Calu3 (cell line): ENCODE measurements at regions of chr20 and their contacts with region 1.

Region 1: DNA sequence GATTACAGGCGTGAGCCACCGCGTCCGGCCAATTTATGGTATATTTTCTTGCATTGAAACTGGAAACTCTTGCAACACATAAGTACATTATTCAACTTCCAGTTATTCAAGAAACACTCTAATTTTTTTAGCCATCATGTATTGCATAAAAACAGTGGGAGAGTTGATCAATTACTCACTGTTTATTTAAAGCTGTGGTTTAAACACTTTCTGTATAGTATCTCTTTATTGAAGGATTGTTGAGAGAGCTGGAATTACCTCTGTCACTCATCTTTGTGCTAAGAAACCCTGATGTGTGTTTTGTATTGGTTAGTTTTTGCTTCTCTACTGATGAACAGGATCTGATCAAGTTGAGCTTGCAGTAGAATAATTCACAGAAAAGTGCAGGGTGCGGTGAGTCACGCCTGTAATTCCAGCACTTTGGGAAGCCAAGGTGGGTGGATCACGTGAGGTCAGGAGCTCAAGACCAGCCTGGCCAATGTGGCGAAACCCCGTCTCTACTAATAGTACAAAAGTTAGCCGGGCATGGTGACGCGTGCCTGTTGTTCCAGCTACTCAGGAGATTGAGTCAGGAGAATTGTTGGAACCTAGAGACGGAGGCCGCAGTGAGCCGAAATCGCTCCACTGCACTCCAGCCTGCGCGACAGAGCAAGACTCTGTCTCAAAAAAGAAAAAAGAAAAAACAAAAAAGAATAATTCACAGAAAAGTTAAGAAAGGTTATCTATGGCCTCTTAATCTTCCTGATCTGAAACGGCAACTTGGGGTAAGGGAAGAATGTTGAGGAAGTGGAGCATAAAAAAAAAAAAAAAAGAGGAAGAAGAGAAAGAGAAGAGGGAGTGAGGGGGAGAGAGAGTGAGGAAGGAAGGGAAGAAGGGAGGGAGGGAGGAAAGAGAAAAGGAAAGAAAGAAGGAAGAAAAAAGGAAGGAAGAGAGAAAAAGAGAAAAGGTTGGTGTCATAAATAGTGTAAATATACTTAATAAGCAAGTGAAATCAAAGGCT is 69.2 kb upstream of the NCOA3 start:
- DNase-seq: peak; percentile 88
- H3K4me3 Mint-ChIP-seq: peak overlapping the region; percentile 11
- H3K27ac Mint-ChIP-seq: peak overlapping the region; percentile 86
- H3K4me1 Mint-ChIP-seq: peaks cover 28% of the 10 kb centered on the region
- H3K27me3 Mint-ChIP-seq: no peaks in the 10 kb centered on the region
- CTCF ChIP-seq: no peak

Region 2: DNA sequence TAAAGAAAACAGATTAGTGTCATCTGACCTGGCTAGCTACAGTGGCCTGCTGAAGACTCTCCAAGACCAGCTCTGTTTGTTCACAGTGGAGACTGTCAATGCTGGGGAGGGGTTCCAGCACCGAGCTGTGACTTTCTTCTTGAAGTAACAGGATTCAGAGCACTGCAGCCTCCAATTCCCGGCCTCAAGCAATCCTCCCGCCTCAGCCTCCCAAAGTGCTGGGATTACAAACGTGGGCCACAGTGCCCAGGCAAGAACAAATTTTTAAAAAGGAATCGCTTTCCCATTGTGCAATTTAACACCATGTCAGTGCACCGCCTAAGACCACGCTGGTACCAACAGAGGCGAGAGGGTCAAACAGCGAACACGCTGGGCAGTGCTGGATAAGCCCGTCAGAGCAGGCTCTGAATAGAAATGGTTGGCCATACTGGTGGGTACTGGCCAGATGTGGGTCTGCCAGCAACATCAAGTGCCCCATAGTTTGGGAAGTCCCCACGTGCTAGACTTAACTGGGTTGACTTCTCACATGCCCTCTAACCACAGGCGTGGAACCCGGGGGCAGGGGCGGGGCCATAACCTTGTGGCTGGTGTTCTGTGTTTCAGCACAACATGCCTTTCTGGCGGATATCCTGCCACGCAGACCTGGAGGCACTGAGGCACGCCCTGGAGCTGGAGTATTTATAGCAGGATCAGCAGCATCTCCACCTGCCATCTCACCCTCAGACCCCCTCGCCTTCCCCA is 244.9 kb before region 1 on chr20:
- CTCF ChIA-PET with region 1: no interaction called
- intact Hi-C with region 1: no loop called
- DNase-seq: no peak
- H3K4me3 Mint-ChIP-seq: no peak overlapping the region
- H3K27ac Mint-ChIP-seq: no peak overlapping the region
- H3K4me1 Mint-ChIP-seq: no peaks in the 10 kb centered on the region
- H3K27me3 Mint-ChIP-seq: peaks cover 21% of the 10 kb centered on the region
- CTCF ChIP-seq: no peak

Region 3: GRCh38 chr20:47392015-47392720 is 40.3 kb before region 1 on chr20:
- CTCF ChIA-PET with region 1: interaction called, 10 read pairs
- intact Hi-C with region 1: loop called (anchors 5 kb)
- DNase-seq: peak; percentile 87
- H3K4me3 Mint-ChIP-seq: peak overlapping the region; percentile 34
- H3K27ac Mint-ChIP-seq: peak overlapping the region; percentile 100
- H3K4me1 Mint-ChIP-seq: peaks cover 34% of the 10 kb centered on the region
- H3K27me3 Mint-ChIP-seq: no peaks in the 10 kb centered on the region
- CTCF ChIP-seq: no peak

Region 4: DNA sequence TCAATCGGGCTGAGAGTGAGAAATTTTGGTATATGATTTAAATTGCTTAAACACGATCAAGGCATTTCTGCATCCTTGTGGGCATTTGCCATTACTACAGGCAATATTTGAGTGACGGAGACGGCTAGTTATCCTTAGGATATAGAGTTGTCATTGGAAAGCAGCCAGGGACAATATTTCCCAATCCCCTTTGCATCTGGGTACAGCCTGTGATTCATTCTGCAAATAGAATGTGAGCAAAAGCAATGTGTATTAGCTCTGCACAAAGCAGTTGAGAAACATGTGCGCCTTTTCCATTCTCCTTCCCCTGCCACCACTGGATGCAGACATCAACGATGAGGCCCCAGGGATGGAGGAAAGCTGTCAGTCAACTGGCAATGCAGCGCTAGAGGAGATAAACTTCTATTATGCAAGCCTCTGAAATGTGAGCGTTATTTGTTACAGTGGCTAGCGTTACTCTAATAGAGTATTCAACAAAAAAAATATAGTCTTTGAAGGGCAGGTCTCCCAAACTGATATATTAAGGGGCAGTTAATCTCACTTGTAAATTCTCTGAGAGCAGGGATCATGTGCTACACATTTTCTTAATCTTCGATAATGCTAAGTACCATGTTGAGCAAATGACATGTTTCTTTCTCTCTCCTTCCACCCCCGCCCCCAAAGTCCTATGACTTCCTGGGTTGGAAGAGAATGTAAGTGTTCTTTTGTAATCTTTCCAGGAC is 32.0 kb after region 1 on chr20:
- CTCF ChIA-PET with region 1: interaction called, 18 read pairs
- intact Hi-C with region 1: loop called (anchors 2 kb)
- DNase-seq: peak; percentile 93
- H3K4me3 Mint-ChIP-seq: peak overlapping the region; percentile 5
- H3K27ac Mint-ChIP-seq: peak overlapping the region; percentile 33
- H3K4me1 Mint-ChIP-seq: peaks cover 14% of the 10 kb centered on the region
- H3K27me3 Mint-ChIP-seq: no peaks in the 10 kb centered on the region
- CTCF ChIP-seq: peak; percentile 8

Region 5: GRCh38 chr20:47501483-47502270 is 69.2 kb after region 1 on chr20 and contains the start of gene NCOA3:
- CTCF ChIA-PET with region 1: interaction called, 3 read pairs
- intact Hi-C with region 1: loop called (anchors 5 kb)
- DNase-seq: peak; percentile 99
- H3K4me3 Mint-ChIP-seq: peak within 1 kb of the TSS; percentile 83
- H3K27ac Mint-ChIP-seq: peak within 1 kb of the TSS; percentile 80
- H3K4me1 Mint-ChIP-seq: peaks cover 49% of the 10 kb centered on the region
- H3K27me3 Mint-ChIP-seq: no peaks in the 10 kb centered on the region
- CTCF ChIP-seq: peak; percentile 77
- total RNA-seq, gene NCOA3: 60.3 and 63.8 TPM in 2 replicates

Region 6: GRCh38 chr20:47620808-47621805 is 188.6 kb after region 1 on chr20:
- CTCF ChIA-PET with region 1: interaction called, 11 read pairs
- intact Hi-C with region 1: no loop called
- DNase-seq: peak; percentile 48
- H3K4me3 Mint-ChIP-seq: no peak overlapping the region
- H3K27ac Mint-ChIP-seq: peak overlapping the region; percentile 11
- H3K4me1 Mint-ChIP-seq: peaks cover 17% of the 10 kb centered on the region
- H3K27me3 Mint-ChIP-seq: no peaks in the 10 kb centered on the region
- CTCF ChIP-seq: peak; percentile 90

Region 7: GRCh38 chr20:47677635-47678453 is 245.3 kb after region 1 on chr20:
- CTCF ChIA-PET with region 1: no interaction called
- intact Hi-C with region 1: no loop called
- DNase-seq: peak; percentile 87
- H3K4me3 Mint-ChIP-seq: no peak overlapping the region
- H3K27ac Mint-ChIP-seq: no peak overlapping the region
- H3K4me1 Mint-ChIP-seq: no peaks in the 10 kb centered on the region
- H3K27me3 Mint-ChIP-seq: no peaks in the 10 kb centered on the region
- CTCF ChIP-seq: peak; percentile 98